ENCODE measurements at regions of chr15 and their contacts with region 1.

Region 1: DNA sequence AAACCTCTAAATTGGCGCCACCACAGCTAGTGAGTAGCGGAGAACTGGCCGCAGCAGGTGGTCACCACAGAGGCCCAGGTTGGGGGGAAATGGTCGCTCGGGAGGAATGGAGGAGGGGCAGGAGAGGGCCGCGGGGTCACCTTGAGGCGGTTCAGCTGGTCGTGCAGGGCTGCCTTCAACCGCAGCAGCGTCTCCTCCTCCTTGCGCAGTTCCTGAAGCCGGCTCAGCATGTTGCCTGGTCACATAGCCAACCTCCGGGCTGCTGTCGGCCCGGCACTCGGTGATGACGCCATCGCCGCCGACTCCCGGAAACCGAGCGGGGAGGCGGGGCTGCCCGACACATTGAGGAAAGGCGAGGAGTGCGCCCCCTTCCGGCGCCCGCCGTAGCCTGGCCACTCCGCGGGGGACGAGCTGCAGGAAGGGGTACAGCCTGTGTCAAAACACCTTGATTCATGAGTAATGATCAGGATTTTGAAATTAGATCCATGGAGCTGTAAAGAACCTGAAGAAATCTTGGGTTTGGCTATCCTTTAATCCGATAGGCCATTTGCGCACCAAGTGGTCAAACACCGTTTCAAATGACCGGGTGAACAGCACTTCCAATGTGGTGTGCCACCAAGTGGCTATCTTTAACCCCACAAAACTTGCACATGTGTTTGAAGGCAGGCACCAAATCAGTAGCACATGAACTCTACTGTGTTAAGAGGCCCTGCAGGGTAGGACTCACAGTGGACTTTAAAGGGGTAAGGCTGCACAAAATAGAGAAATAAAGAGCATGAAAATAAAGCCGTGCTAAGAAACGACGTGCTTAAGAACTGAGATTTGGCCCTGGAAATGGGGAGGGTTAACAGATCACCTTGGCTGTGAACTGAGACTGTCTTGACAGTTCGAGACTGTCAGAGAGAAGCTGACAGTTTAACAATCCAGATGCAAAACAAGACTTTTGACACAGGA is at the start of gene SNAPC5:
- DNase-seq: peak; percentile 98
- H3K4me3 Mint-ChIP-seq: peak within 1 kb of the TSS; percentile 91
- H3K27ac Mint-ChIP-seq: peak within 1 kb of the TSS; percentile 88
- H3K4me1 Mint-ChIP-seq: peaks cover 70% of the 10 kb centered on the region
- H3K27me3 Mint-ChIP-seq: no peaks in the 10 kb centered on the region
- total RNA-seq, gene SNAPC5: 16.7 to 17.2 TPM

Region 2: DNA sequence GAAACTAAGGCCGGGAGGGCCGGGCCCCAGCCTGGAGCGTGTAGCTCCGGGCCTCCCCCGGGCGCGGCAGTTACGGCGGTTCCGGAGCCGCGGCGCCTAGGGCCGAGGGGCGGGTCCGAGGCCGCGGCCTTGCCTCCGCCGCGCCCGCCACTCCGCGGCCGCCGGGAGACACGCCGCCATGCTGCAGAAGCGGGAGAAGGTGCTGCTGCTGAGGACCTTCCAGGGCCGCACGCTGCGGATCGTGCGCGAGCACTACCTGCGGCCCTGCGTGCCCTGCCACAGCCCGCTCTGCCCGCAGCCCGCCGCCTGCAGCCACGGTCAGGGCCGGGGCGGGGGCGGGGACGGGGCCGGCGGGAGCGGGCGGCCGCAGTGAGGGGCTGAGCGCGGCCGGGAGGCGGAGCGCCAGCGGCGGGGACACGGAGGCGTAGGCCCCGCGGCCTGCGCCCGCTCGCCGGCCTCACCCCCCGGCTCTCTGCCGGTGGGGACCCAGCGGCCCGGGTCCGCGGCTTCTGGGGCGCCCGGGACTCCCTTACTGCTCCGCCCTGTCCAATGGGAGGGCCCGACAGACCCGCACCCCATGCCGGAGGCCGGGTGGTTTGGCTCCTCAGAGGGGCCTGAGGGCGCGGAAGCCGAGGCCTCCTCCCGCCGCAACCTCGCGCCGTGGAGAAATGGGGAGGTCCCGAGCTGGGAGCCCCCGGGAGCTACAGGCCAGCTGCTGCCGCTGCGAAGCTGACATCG is 204.2 kb before region 1 on chr15 and contains the start of gene DIS3L:
- CTCF ChIA-PET with region 1: interaction called, 21 read pairs
- POLR2A ChIA-PET with region 1: interaction called, 50 read pairs
- DNase-seq: peak; percentile 68
- H3K4me3 Mint-ChIP-seq: peak within 1 kb of the TSS; percentile 83
- H3K27ac Mint-ChIP-seq: peak within 1 kb of the TSS; percentile 91
- H3K4me1 Mint-ChIP-seq: peaks cover 52% of the 10 kb centered on the region
- H3K27me3 Mint-ChIP-seq: no peaks in the 10 kb centered on the region
- total RNA-seq, gene DIS3L: 24.0 to 24.9 TPM

Region 3: GRCh38 chr15:66356345-66357236 is 141.2 kb before region 1 on chr15 and contains the start of gene TIPIN:
- CTCF ChIA-PET with region 1: interaction called, 74 read pairs
- POLR2A ChIA-PET with region 1: interaction called, 55 read pairs
- DNase-seq: peak; percentile 99
- H3K4me3 Mint-ChIP-seq: peak within 1 kb of the TSS; percentile 93
- H3K27ac Mint-ChIP-seq: peak within 1 kb of the TSS; percentile 93
- H3K4me1 Mint-ChIP-seq: peaks cover 37% of the 10 kb centered on the region
- H3K27me3 Mint-ChIP-seq: no peaks in the 10 kb centered on the region
- total RNA-seq, gene TIPIN: 27.2 to 28.9 TPM

Region 4: GRCh38 chr15:66369773-66370651 is 127.8 kb before region 1 on chr15:
- CTCF ChIA-PET with region 1: interaction called, 11 read pairs
- POLR2A ChIA-PET with region 1: interaction called, 3 read pairs
- DNase-seq: peak; percentile 51
- H3K4me3 Mint-ChIP-seq: peak overlapping the region; percentile 54
- H3K27ac Mint-ChIP-seq: peak overlapping the region; percentile 80
- H3K4me1 Mint-ChIP-seq: peaks cover 22% of the 10 kb centered on the region
- H3K27me3 Mint-ChIP-seq: no peaks in the 10 kb centered on the region

Region 5: GRCh38 chr15:66401130-66402021 is 96.4 kb before region 1 on chr15:
- CTCF ChIA-PET with region 1: interaction called, 15 read pairs
- POLR2A ChIA-PET with region 1: interaction called, 16 read pairs
- DNase-seq: peak; percentile 48
- H3K4me3 Mint-ChIP-seq: peak overlapping the region; percentile 66
- H3K27ac Mint-ChIP-seq: peak overlapping the region; percentile 75
- H3K4me1 Mint-ChIP-seq: peaks cover 62% of the 10 kb centered on the region
- H3K27me3 Mint-ChIP-seq: no peaks in the 10 kb centered on the region

Region 6: DNA sequence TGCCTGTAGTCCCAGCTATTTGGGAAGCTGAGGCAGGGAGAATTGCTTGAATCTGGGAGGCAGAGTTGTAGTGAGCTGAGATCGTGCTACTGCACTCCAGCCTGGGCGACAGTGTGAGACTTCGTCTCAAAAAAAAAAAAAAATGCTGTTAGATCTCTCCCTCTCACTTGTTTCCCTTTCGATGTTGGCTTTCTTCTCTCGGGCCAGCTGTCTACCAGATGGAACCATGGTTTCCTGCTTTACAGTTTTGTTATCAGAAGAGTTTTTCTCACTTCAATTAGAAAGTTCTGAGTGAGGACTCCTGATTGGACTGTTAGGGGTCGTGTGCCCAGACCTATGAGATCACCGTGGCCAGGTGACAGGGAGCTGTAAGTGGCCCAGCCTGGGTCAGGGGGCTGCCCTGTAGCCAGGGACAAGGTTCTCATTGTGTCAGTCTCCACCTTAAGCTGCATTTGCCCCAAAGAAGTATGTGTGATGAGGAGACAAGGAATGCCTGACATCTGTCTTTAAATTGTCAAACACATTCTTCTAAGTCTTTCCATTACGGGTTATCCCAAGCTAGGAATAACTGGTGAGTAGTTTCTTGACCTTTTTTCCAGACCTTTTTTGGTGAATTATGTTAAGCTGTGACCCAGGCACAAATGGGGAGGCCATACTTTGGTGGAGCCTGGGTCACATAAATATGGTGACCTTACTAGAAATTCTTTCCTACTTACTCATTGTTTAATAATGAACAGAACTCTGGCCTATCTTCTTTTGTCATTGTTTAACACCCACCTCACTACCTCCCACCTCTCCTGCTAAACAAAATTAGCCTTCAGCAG is 25.4 kb before region 1 on chr15:
- CTCF ChIA-PET with region 1: interaction called, 23 read pairs
- POLR2A ChIA-PET with region 1: interaction called, 27 read pairs
- DNase-seq: peak; percentile 39
- H3K4me3 Mint-ChIP-seq: peak overlapping the region; percentile 2
- H3K27ac Mint-ChIP-seq: peak overlapping the region; percentile 70
- H3K4me1 Mint-ChIP-seq: peaks cover 31% of the 10 kb centered on the region
- H3K27me3 Mint-ChIP-seq: no peaks in the 10 kb centered on the region

Region 7: GRCh38 chr15:66673410-66674322 is 175.9 kb after region 1 on chr15:
- CTCF ChIA-PET with region 1: no interaction called
- POLR2A ChIA-PET with region 1: no interaction called
- DNase-seq: peak; percentile 57
- H3K4me3 Mint-ChIP-seq: no peak overlapping the region
- H3K27ac Mint-ChIP-seq: no peak overlapping the region
- H3K4me1 Mint-ChIP-seq: peaks cover 18% of the 10 kb centered on the region
- H3K27me3 Mint-ChIP-seq: no peaks in the 10 kb centered on the region

Measured in activated CD4-positive, alpha-beta memory T cell treated with anti-CD3 and anti-CD28 coated beads, Interleukin-2, amount 10 ng/mL, durations not matched to agents 7 days and 5 days (primary cell).